HEK293 (cell line): ENCODE measurements at regions of chr20 and their contacts with region 1.

Region 1: GRCh38 chr20:48635433-48636310 is 192.1 kb downstream of the PREX1 start:
- H3K4me3 ChIP-seq: no peak overlapping the region
- H3K27ac ChIP-seq: no peak overlapping the region
- H3K4me1 ChIP-seq: no peaks in the 10 kb centered on the region
- CTCF ChIP-seq: peak; percentile 87

Region 2: GRCh38 chr20:48609491-48609978 is 26.1 kb before region 1 on chr20:
- CTCF ChIA-PET with region 1: no interaction called
- POLR2A ChIA-PET with region 1: no interaction called
- H3K4me3 ChIP-seq: no peak overlapping the region
- H3K27ac ChIP-seq: no peak overlapping the region
- H3K4me1 ChIP-seq: no peaks in the 10 kb centered on the region
- CTCF ChIP-seq: no peak

Region 3: GRCh38 chr20:48648550-48648951 is 12.9 kb after region 1 on chr20:
- CTCF ChIA-PET with region 1: interaction called, 15 read pairs
- POLR2A ChIA-PET with region 1: no interaction called
- H3K4me3 ChIP-seq: no peak overlapping the region
- H3K27ac ChIP-seq: no peak overlapping the region
- H3K4me1 ChIP-seq: no peaks in the 10 kb centered on the region
- CTCF ChIP-seq: no peak

Region 4: GRCh38 chr20:49303065-49303552 is 667.4 kb after region 1 on chr20:
- CTCF ChIA-PET with region 1: no interaction called
- POLR2A ChIA-PET with region 1: no interaction called
- H3K4me3 ChIP-seq: no peak overlapping the region
- H3K27ac ChIP-seq: no peak overlapping the region
- H3K4me1 ChIP-seq: no peaks in the 10 kb centered on the region
- CTCF ChIP-seq: no peak